ENCODE measurements at regions of chr21 and their contacts with region 1.

Region 1: DNA sequence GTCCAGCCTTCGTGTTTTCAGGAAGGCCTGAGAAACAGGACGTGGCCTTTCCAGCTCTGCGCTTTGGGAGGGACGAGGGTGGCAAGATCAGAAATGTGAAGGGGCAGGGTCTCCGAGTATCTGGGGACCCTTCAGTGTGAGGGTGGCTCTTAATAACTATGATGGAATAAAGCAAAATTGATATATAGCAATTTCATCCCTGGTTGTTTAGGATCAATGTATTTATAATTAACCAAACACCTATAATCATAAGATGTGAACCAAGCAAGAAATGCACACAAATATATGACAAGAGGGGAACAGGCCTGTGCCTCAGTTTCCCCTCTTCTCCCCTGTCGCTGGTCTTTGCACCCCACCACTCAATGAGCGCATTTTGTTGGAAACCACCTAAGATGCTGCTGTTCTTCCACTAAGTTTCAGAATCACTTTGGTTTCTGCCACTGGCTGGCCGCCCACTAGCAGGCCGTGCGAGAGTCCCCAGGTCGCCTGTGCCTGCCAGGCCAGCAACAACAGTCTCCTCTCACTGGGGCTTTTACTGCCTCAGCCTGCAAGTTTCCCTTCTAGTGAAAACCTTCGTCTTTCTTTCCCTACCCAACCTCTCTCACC is 36.6 kb downstream of the UBASH3A start:
- DNase-seq: no peak
- ATAC-seq: no peak
- H3K4me3 ChIP-seq: no peak overlapping the region
- H3K27ac ChIP-seq: no peak overlapping the region
- H3K4me1 ChIP-seq: no peaks in the 10 kb centered on the region
- H3K27me3 ChIP-seq: no peaks in the 10 kb centered on the region
- CTCF ChIP-seq: no peak

Region 2: GRCh38 chr21:42309753-42310221 is 130.5 kb before region 1 on chr21:
- intact Hi-C with region 1: loop called in 1 of 3 experiments (anchors 10 kb)
- DNase-seq: peak in 4 of 6 donors; percentile 59 to 85 (median 73)
- ATAC-seq: peak; percentile 49 to 80 (median 68)
- H3K4me3 ChIP-seq: no peak overlapping the region
- H3K27ac ChIP-seq: no peak overlapping the region
- H3K4me1 ChIP-seq: peaks cover 0 to 13% (median 10%) of the 10 kb centered on the region in 3 donors
- H3K27me3 ChIP-seq: no peaks in the 10 kb centered on the region
- CTCF ChIP-seq: peak; percentile 57 to 77 (median 73)

Region 3: DNA sequence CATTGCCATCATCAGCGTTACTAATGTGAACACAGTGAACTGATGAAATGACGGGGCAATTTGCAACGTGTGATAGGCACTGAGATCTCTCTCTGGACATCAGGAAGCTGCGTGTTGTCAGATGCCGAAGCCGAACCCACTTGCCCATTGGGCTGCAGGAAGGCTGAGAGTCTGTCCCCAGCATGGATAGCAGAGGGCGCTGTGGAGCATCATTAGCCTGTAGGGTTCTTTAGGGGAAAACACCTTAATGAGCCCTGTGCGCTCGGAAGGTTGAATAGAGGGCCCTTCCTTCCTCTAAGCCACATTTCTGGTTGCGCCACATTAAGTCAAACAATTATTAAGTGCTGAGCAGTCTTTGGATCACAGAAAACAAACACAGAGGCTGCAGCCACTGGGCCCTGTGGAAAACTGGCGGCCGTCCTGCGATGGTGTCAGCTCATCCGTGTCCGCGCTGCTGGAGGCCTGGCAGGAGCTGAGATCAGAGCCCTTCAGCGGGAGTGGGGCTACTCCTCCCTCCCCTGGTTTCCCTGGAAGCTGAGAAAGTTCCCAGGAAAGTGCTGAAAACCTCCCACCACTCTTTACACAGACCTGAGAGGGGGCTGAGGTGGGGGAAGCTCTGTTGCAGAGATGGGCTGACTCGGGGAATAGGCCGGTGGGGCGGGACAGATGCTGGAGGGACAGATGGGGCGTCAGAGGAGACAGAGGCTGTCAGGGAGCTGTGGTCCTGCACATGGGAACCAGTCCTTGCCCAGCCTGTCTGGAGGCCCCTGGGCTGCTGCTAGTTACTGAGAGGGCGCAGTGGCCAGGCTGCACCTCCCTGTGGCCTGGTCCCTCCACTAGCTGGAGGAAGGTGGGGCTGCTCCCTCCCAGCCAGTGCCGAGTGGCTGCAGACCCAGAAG is 102.2 kb before region 1 on chr21:
- intact Hi-C with region 1: loop called in 1 of 3 experiments (anchors 10 kb)
- DNase-seq: peak in 5 of 6 donors; percentile 57 to 80 (median 67)
- ATAC-seq: peak; percentile 85 to 97 (median 95)
- H3K4me3 ChIP-seq: no peak overlapping the region
- H3K27ac ChIP-seq: peak overlapping the region in 3 of 4 donors; percentile 48 to 53 (median 48)
- H3K4me1 ChIP-seq: no peaks in the 10 kb centered on the region
- H3K27me3 ChIP-seq: no peaks in the 10 kb centered on the region
- CTCF ChIP-seq: peak; percentile 22 to 48 (median 38)

Measured in pancreas (tissue), 10 donors.